ENCODE measurements at regions of chr3 and their contacts with region 1.

Region 1: GRCh38 chr3:86774082-86774691 is 216.8 kb downstream of the VGLL3 start:
- DNase-seq: no peak
- ATAC-seq: no peak
- H3K4me3 ChIP-seq: no peak overlapping the region
- H3K27ac ChIP-seq: no peak overlapping the region
- H3K4me1 ChIP-seq: no peaks in the 10 kb centered on the region
- H3K27me3 ChIP-seq: no peaks in the 10 kb centered on the region
- CTCF ChIP-seq: peak; percentile 44

Region 2: DNA sequence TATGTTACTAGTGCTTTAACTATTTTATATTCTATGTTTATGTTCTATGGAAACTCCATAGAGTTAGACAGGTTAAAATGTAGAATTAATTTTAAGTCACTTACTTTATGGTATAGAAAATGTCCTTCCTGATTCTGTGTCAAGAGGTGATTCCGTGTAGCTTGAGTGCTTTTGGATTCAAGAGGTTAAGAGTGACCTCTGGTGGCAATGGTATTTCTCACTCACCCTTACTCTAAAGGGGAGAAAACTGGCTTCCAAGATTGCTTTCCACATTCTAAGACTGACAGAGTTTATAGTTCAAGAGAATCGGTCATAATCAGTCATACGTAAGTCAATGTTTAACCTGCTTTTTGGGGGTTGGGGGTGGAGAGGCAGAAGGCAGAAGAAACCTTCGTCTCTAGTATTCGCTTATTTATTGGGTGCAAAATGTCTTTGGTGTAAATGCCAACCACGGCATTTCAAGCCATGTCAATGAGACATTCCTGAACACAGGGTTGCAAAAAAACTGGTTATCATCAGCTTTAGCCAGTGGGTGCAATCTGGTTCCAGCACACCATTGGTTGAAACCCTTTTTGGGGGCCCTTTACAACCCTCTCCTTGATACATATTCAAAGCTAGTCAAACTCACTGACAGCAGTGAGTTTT is 308.7 kb after region 1 on chr3:
- intact Hi-C with region 1: loop called (anchors 10 kb)
- DNase-seq: no peak
- ATAC-seq: peak; percentile 60 to 77
- H3K4me3 ChIP-seq: no peak overlapping the region
- H3K27ac ChIP-seq: no peak overlapping the region
- H3K4me1 ChIP-seq: no peaks in the 10 kb centered on the region
- H3K27me3 ChIP-seq: no peaks in the 10 kb centered on the region
- CTCF ChIP-seq: peak; percentile 55

Region 3: GRCh38 chr3:87167628-87168456 is 393.7 kb after region 1 on chr3:
- intact Hi-C with region 1: loop called (anchors 5 kb)
- DNase-seq: no peak
- ATAC-seq: peak in 1 of 2 donors; percentile 66
- H3K4me3 ChIP-seq: peak overlapping the region; percentile 45
- H3K27ac ChIP-seq: no peak overlapping the region
- H3K4me1 ChIP-seq: no peaks in the 10 kb centered on the region
- H3K27me3 ChIP-seq: peaks cover 4% of the 10 kb centered on the region
- CTCF ChIP-seq: peak; percentile 64